ENCODE measurements at regions of chrX and their contacts with region 1.

Region 1: GRCh38 chrX:13022926-13023325 is 21.5 kb downstream of the FAM9C start:
- DNase-seq: no peak
- ATAC-seq: no peak
- H3K4me3 ChIP-seq: no peak overlapping the region
- H3K4me3 Mint-ChIP-seq: peak overlapping the region in 1 of 3 donors; percentile 12
- H3K27ac ChIP-seq: no peak overlapping the region
- H3K27ac Mint-ChIP-seq: peak overlapping the region; percentile 76 to 79
- H3K4me1 ChIP-seq: peaks cover 30 to 43% of the 10 kb centered on the region in 2 experiments
- H3K4me1 Mint-ChIP-seq: peaks cover 55 to 59% (median 57%) of the 10 kb centered on the region in 3 donors
- H3K27me3 ChIP-seq: no peaks in the 10 kb centered on the region
- H3K27me3 Mint-ChIP-seq: peaks cover 0 to 31% of the 10 kb centered on the region in 2 donors

Region 2: DNA sequence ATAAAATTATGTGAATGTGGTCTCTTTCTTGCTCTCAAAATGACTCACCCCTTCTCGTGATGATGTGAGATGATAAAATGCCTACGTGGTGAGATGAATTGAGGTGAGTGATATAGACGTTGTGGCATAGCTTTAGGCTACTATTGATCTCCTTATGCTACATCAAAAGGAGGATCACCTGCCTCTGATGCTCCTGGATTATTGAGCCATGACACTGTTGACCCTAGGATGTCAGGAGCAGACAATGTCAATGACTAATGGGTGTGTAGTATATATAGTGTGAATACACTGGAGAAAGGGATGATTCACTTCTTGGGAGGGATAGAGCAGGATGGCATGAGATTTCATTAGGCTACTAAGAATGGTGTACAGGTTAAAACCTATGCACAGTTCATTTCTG is 442.4 kb before region 1 on chrX:
- CTCF ChIA-PET with region 1: no interaction called
- POLR2A ChIA-PET with region 1: no interaction called
- DNase-seq: no peak
- ATAC-seq: no peak
- H3K4me3 ChIP-seq: no peak overlapping the region
- H3K4me3 Mint-ChIP-seq: no peak overlapping the region
- H3K27ac ChIP-seq: no peak overlapping the region
- H3K27ac Mint-ChIP-seq: no peak overlapping the region
- H3K4me1 ChIP-seq: no peaks in the 10 kb centered on the region
- H3K4me1 Mint-ChIP-seq: no peaks in the 10 kb centered on the region
- H3K27me3 ChIP-seq: no peaks in the 10 kb centered on the region
- H3K27me3 Mint-ChIP-seq: peaks cover 0 to 25% of the 10 kb centered on the region in 2 donors

Region 3: GRCh38 chrX:13398839-13399238 is 375.9 kb after region 1 on chrX:
- CTCF ChIA-PET with region 1: no interaction called
- POLR2A ChIA-PET with region 1: interaction called in 1 of 2 experiments, 11 read pairs
- DNase-seq: no peak
- ATAC-seq: no peak
- H3K4me3 ChIP-seq: no peak overlapping the region
- H3K4me3 Mint-ChIP-seq: no peak overlapping the region
- H3K27ac ChIP-seq: no peak overlapping the region
- H3K27ac Mint-ChIP-seq: no peak overlapping the region
- H3K4me1 ChIP-seq: no peaks in the 10 kb centered on the region
- H3K4me1 Mint-ChIP-seq: no peaks in the 10 kb centered on the region
- H3K27me3 ChIP-seq: peaks cover 0 to 2% of the 10 kb centered on the region in 2 experiments
- H3K27me3 Mint-ChIP-seq: peaks cover 0 to 18% of the 10 kb centered on the region in 2 donors